MCF 10A (cell line): ENCODE measurements at regions of chr9 and their contacts with region 1.

Region 1: DNA sequence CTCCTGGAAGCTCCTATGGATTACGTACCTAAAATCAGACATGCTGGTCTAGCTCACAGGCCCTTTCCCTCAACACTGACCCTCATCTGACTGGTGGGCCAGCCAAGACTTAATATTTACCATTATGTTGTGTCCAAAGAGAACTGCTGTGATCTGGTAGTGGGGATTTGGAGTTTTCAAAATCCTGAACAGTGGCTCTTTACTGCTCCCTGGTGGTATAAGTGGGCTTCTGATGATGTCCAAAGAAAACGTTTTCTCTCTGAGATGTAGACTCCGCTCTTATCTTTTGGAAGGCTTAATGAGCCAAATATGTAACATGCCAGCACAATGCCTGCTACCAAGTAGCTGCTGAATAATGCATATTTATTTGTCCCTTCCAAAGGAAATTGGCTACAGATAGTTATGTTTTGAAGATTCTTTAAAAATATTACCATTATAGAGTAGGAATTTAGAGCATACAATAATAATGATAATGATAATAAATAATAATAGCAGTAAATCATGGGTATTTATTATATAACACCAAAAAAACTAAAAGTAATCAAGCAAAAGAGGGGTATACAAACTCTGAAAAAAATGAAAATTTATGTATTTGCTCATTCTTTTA is 406.6 kb upstream of the TNC start:
- DNase-seq: peak; percentile 73
- H3K4me3 Mint-ChIP-seq: no peak overlapping the region
- H3K27ac Mint-ChIP-seq: no peak overlapping the region
- H3K4me1 Mint-ChIP-seq: no peaks in the 10 kb centered on the region
- H3K27me3 Mint-ChIP-seq: no peaks in the 10 kb centered on the region
- CTCF ChIP-seq: peak; percentile 67

Region 2: DNA sequence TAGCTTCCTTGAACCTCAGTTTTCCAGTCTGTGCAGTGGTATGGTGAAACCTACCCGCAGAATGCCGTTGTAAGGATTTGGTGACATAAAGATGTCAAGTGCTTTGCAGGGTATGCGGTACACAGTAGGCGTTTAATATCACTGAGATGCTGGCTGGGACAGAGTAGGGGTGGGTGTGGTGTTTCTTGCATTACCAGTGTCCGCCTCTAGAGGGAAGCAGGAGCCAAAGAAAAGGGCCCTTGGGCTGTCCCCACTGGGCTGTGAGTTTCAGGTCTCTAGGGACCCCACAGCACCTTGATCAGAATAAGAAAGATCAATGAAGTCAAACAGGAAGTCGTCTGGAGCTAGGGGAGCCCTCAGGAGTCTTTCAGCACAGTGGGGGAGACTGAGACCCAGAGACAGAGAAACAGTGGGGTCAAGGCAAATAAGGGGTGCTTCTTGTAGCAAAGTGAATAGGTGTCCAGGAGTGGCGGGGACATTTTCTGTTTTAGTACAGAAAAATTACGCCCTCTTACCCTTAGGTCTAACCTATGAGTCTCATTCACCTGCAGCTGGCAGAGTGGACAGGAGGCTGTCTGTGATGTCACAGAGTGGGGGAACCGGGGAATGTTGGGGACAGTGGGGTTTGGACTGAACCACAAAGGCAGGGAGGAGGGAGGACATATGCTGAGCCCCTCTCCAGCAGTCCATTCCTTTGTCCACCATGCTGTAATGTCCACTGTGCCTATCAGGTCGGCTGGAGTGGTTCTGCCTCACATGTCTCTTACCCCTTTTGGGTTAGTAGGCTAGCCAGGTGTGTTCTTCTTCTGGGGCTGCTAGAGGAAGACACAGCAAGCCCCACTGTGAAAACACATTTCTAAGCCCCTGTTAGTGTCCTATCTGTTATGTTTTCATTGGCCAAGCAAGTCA is 862.2 kb before region 1 on chr9:
- CTCF ChIA-PET with region 1: interaction called, 4 read pairs
- POLR2A ChIA-PET with region 1: no interaction called
- intact Hi-C with region 1: loop called (anchors 2 kb)
- DNase-seq: peak; percentile 64
- H3K4me3 Mint-ChIP-seq: no peak overlapping the region
- H3K27ac Mint-ChIP-seq: no peak overlapping the region
- H3K4me1 Mint-ChIP-seq: peaks cover 8% of the 10 kb centered on the region
- H3K27me3 Mint-ChIP-seq: no peaks in the 10 kb centered on the region
- CTCF ChIP-seq: peak; percentile 88

Region 3: GRCh38 chr9:115013998-115014397 is 510.6 kb before region 1 on chr9:
- CTCF ChIA-PET with region 1: interaction called, 19 read pairs
- POLR2A ChIA-PET with region 1: no interaction called
- intact Hi-C with region 1: loop called (anchors 1 kb)
- DNase-seq: peak; percentile 84
- H3K4me3 Mint-ChIP-seq: no peak overlapping the region
- H3K27ac Mint-ChIP-seq: no peak overlapping the region
- H3K4me1 Mint-ChIP-seq: peaks cover 17% of the 10 kb centered on the region
- H3K27me3 Mint-ChIP-seq: peaks cover 14% of the 10 kb centered on the region
- CTCF ChIP-seq: peak; percentile 75

Region 4: GRCh38 chr9:115226127-115226526 is 298.4 kb before region 1 on chr9:
- CTCF ChIA-PET with region 1: interaction called, 30 read pairs
- POLR2A ChIA-PET with region 1: no interaction called
- intact Hi-C with region 1: loop called (anchors 1 kb)
- DNase-seq: peak; percentile 34
- H3K4me3 Mint-ChIP-seq: no peak overlapping the region
- H3K27ac Mint-ChIP-seq: no peak overlapping the region
- H3K4me1 Mint-ChIP-seq: no peaks in the 10 kb centered on the region
- H3K27me3 Mint-ChIP-seq: peaks cover 10% of the 10 kb centered on the region
- CTCF ChIP-seq: peak; percentile 56

Region 5: DNA sequence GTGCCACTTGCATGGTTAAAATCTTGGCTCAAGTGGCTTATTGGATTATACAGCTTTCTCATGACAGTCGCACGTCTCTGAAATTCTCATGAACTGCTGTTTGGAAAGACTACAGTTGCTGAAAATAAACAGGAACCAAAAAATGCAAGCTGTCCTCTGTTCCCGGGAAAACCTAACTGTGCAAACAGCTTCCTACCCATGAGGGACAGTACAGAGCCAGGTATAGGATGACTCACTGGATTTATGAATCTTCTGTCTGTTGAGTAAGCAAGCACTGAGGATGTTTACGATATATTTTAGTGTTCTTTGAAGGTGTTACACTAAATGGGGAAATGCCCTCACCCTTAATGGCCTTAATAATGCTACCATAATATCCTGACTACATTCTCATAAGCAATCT is 26.3 kb before region 1 on chr9:
- CTCF ChIA-PET with region 1: interaction called, 16 read pairs
- POLR2A ChIA-PET with region 1: interaction called, 3 read pairs
- intact Hi-C with region 1: no loop called
- DNase-seq: peak; percentile 50
- H3K4me3 Mint-ChIP-seq: no peak overlapping the region
- H3K27ac Mint-ChIP-seq: no peak overlapping the region
- H3K4me1 Mint-ChIP-seq: peaks cover 7% of the 10 kb centered on the region
- H3K27me3 Mint-ChIP-seq: no peaks in the 10 kb centered on the region
- CTCF ChIP-seq: no peak